Activated naive CD4-positive, alpha-beta T cell treated with anti-CD3 and anti-CD28 coated beads, Interleukin-2, amount 10 ng/mL, durations not matched to agents 7 days and 5 days (primary cell): ENCODE measurements at regions of chr1 and their contacts with region 1.

Region 1: DNA sequence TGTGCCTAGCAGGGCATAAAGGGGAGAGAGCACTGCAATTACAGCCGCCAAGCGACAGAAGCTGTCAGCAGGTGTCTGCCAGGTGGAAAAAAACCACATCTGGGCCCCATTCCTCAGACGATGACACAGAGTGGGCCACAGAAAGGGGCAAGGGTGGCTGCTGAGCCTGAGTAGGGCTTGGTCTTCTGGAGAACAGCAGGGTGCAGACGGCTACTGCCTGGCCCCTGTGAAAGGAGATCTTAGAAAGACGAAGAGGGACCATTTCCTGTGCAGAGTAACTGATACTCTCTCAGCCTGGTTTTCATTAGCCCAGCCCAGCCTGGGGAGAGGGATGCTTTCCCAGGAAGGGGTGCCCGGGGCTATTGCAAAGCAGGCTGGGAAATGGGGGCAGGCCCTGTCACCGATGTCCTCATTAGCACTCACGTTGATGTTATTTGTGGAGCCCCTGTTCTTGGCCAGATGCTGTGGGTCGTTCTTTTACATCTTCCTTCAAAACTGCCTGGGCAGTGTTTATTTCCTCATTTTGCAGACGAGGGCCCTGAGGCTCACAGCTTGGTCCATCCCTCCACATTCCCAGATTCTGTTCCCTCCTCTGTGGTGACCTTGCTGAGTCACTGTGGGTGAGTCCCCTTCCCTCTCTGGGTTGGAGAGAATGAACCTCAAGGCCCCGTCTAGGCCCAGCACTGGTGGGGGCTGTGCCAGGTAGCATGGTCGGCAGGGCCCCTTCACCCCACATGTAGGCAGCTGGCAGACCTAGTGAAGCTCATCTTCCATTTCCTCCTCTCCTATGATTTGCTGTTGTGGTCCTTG is 472.8 kb downstream of the PTPRU start:
- DNase-seq: no peak
- H3K4me3 Mint-ChIP-seq: no peak overlapping the region
- H3K27ac Mint-ChIP-seq: no peak overlapping the region
- H3K4me1 Mint-ChIP-seq: peaks cover 26% of the 10 kb centered on the region
- H3K27me3 Mint-ChIP-seq: peaks cover 28% of the 10 kb centered on the region

Region 2: GRCh38 chr1:29579821-29580425 is 129.2 kb before region 1 on chr1:
- CTCF ChIA-PET with region 1: no interaction called
- DNase-seq: no peak
- H3K4me3 Mint-ChIP-seq: no peak overlapping the region
- H3K27ac Mint-ChIP-seq: no peak overlapping the region
- H3K4me1 Mint-ChIP-seq: no peaks in the 10 kb centered on the region
- H3K27me3 Mint-ChIP-seq: no peaks in the 10 kb centered on the region

Region 3: GRCh38 chr1:29719253-29719652 is 10.1 kb after region 1 on chr1:
- CTCF ChIA-PET with region 1: interaction called, 12 read pairs
- DNase-seq: no peak
- H3K4me3 Mint-ChIP-seq: no peak overlapping the region
- H3K27ac Mint-ChIP-seq: no peak overlapping the region
- H3K4me1 Mint-ChIP-seq: peaks cover 5% of the 10 kb centered on the region
- H3K27me3 Mint-ChIP-seq: no peaks in the 10 kb centered on the region

Region 4: DNA sequence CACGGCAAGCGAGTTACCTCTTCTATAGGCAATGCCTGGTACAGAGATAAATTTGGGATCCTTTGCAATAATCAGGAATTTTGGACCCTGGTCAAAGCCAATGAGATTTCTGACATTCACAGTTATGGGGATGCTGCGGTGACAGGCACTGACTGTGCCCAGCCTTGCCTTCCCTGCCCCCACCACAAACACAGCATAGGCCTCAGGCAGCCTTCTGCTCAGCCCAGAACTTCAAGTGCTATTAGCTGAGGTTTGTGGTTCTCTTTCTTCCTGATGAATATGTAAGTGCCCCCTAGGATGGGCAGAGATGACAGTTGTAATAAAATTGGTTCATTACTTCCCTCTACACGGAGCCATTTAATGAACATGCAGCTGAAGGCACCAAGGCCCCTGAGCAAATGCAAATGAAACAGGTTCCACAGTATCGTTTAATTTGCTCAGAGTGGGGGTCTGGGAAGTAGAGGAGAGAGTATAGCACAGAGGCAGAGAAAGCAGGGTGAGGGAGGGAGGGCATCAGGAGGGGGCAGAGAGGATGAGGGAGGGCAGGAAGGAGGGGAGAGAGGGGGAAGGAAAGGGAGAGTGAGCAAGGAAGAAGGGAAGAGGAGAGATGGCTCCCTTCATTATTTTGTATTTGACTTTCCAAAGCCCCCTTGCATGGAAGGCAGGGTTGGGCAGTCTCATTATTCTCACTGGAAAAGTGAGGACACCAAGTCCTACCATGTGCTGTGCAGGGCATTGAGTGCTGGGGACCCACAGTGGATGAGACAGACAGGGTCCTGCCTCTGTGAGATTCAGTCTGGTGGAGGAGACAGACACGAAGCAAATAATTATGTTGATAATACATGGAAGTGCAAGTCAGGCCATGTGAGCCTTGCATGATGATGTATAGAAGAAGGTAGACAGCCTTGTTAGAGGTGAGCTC is 40.2 kb after region 1 on chr1:
- CTCF ChIA-PET with region 1: no interaction called
- DNase-seq: no peak
- H3K4me3 Mint-ChIP-seq: no peak overlapping the region
- H3K27ac Mint-ChIP-seq: no peak overlapping the region
- H3K4me1 Mint-ChIP-seq: no peaks in the 10 kb centered on the region
- H3K27me3 Mint-ChIP-seq: peaks cover 7% of the 10 kb centered on the region